Prostate gland (tissue), 2 donors: ENCODE measurements at regions of chr17 and their contacts with region 1.

Region 1: DNA sequence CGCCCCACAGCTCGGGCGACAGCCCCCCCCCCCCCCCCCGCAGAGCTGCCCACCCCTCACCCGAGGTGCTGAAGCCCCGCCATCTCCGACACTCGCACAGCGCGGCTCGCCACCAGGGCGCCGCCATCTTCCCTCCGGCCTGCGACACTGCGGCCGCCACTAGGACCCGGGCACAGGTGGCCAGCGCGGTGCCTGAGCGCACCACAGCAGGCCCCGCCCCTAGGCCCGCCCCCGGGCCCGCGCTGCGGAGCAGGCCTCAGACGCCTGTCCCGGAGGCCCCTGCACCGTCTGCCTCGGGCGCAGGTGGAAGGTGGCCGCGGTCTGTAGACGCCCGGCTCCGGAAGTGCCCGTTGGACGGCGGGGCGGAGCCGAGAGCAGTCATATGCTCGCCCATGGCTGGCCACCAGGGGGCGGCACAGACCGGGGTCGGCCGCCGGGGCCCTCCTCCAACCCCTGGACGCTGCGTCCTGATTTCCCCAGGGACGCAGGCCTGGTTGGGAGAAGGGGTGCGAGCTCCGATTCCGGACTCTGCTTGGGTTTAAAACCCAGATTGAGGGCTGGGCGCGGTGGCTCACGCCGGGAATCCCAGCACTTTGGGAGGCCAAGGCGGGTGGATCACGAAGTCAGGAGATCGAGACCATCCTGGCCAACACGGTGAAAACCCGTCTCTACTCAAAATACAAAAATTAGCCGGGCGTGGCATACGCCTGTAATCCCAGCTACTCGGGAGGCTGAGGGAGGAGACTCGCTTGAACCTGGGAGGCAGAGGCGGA is at the start of gene MRPL38:
- DNase-seq: peak; percentile 94
- H3K4me3 ChIP-seq: peak within 1 kb of the TSS; percentile 70 to 80
- H3K27ac ChIP-seq: peak within 1 kb of the TSS; percentile 80 to 93
- H3K4me1 ChIP-seq: peaks cover 10% of the 10 kb centered on the region
- H3K27me3 ChIP-seq: no peaks in the 10 kb centered on the region
- CTCF ChIP-seq: peak; percentile 91 to 100 (median 100)
- POLR2A ChIP-seq: peak; percentile 76
- total RNA-seq, gene MRPL38: 40.3 to 85.6 TPM

Region 2: DNA sequence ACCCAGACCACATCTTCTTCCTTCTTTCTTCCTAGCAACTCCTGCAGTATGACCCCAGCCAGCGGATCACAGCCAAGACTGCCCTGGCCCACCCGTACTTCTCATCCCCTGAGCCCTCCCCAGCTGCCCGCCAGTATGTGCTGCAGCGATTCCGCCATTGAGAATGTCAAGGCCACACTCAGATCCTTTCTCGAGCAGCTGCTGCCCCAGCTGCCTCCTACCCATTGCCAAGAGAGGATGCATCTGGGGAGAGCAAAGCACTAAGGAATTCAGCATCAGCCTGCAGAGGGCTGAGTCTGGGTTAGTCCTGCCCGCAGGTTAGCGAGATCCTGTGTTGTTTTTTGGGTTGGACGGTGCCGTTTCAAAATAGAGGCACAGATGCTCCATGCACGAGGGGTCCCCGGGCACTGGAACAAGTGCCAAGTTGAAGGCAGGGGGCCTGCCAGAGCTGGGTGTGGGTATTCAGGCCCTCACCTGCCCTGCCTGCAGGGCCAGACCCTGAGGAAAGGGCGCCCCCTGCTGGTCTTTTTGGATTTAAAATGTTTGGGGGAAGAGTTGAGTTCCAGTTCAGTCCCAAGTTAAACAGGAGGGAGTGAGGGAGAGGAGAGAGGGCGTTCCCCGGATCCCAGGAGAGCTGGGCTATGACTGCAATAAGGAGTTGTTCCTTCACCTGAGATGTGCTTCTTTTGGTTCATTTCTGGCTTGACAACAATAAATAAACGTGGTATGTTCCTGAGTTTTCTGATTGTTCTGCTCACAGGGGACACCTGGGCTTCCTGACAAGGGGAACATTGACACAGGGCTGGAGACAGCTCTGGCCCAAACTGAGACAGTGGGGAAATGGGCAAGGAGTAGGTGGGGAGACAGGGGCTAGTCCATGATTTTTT is 100.6 kb after region 1 on chr17:
- intact Hi-C with region 1: loop called (anchors 2 kb)
- DNase-seq: peak; percentile 72
- H3K4me3 ChIP-seq: no peak overlapping the region
- H3K27ac ChIP-seq: peak overlapping the region in 1 of 2 donors; percentile 71
- H3K4me1 ChIP-seq: peaks cover 10% of the 10 kb centered on the region
- H3K27me3 ChIP-seq: no peaks in the 10 kb centered on the region
- CTCF ChIP-seq: peak; percentile 32 to 88 (median 84)
- POLR2A ChIP-seq: no peak